ENCODE measurements at regions of chr9 and their contacts with region 1.

Region 1: GRCh38 chr9:109574068-109574882 is 76.2 kb upstream of the PTPN3 start:
- DNase-seq: peak in 1 of 2 donors; percentile 48
- ATAC-seq: peak; percentile 46 to 81 (median 72)
- H3K4me3 ChIP-seq: no peak overlapping the region
- H3K27ac ChIP-seq: no peak overlapping the region
- H3K4me1 ChIP-seq: peaks cover 0 to 5% (median 0%) of the 10 kb centered on the region in 9 donors
- H3K27me3 ChIP-seq: no peaks in the 10 kb centered on the region
- CTCF ChIP-seq: peak; percentile 39 to 82 (median 73)

Region 2: DNA sequence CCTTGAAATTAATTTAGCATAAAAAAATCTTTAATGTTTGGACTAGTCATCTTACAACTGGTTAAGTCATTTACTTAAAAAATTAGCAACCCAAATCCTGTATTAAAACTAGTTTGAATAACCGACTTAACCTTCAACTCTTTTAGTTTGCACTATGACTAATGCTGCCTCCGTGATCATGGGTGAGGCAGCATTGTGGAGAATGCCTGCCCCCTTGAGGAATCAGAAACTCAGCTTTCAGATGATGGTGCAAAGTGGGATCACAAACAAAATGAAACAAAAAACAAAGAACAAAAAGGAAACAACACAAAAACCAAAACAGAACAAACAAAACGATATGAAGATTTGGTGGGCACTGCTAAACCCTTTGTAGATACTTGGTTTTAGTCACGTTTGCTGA is 78.7 kb after region 1 on chr9:
- intact Hi-C with region 1: loop called in 9 of 10 experiments (anchors 1 to 5 kb)
- DNase-seq: peak; percentile 7 to 17
- ATAC-seq: peak in 7 of 8 donors; percentile 52 to 82 (median 77)
- H3K4me3 ChIP-seq: no peak overlapping the region
- H3K27ac ChIP-seq: no peak overlapping the region
- H3K4me1 ChIP-seq: no peaks in the 10 kb centered on the region
- H3K27me3 ChIP-seq: no peaks in the 10 kb centered on the region
- CTCF ChIP-seq: peak; percentile 14 to 72 (median 45)

Region 3: DNA sequence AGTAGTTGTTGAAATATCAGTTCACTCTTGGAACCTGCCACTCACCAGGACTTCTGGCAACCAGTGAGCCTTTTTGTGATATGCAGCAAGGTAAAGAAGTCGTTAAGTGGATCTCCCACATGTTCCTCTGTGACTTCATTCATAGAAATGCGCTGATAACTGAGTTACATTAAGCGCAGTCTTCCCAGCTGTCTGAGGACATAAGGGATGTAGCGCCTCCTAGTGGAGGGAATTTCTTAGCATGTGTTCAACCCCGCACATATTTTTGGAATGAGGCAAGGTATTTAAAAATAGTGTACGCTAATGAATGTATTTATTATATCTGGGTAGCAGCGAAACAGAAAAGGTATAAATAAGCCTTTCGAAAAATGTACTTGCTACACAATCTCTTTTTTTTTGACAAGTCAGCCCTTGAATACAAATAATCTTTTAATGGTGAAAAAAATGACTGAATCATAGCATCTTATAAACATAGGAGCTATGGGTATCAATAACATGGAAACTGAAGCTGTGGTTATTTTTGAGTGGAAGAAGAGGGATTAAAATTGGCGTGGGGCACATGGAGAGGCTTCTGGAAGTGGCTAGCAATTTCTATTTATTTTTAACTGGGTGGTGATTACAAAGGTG is 243.7 kb after region 1 on chr9:
- intact Hi-C with region 1: loop called in 6 of 10 experiments (anchors 2 to 10 kb)
- DNase-seq: peak in 1 of 2 donors; percentile 92
- ATAC-seq: peak; percentile 62 to 91 (median 86)
- H3K4me3 ChIP-seq: peak overlapping the region in 3 of 10 donors; percentile 5 to 17 (median 15)
- H3K27ac ChIP-seq: peak overlapping the region; percentile 9 to 83 (median 70)
- H3K4me1 ChIP-seq: peaks cover 5 to 37% (median 32%) of the 10 kb centered on the region in 9 donors
- H3K27me3 ChIP-seq: no peaks in the 10 kb centered on the region
- CTCF ChIP-seq: peak; percentile 78 to 89 (median 83)

Region 4: DNA sequence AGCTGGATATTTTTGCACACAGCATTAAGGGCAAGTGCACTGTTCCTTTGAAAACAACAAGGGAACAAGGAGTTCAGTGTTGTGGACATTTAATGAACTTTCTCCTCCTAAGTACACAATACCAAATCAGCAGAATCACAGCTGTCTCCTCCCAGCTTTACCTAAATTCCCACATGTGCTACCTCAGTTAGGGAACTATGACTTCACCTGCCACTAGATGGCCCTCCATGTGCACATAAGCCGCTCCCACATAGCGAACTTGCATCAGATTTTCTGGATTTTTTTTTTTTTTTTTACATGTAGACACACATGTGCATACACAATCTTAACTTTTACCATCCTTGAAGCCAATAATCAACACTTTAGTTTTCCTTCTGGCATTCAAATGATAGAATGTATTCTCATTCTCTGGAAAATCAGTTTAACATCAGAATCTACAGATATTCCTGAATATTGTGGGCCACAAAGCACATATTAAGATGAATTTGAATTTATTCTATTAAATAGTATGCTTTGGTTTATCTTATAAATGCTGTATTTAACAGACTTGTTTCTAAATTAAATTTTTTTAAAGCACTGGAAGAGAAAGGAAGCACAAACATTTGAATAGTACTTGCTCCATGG is 329.4 kb after region 1 on chr9:
- intact Hi-C with region 1: loop called in 1 of 10 experiments (anchors 5 kb)
- DNase-seq: peak; percentile 28 to 82
- ATAC-seq: peak in 6 of 8 donors; percentile 36 to 56 (median 40)
- H3K4me3 ChIP-seq: no peak overlapping the region
- H3K27ac ChIP-seq: peak overlapping the region in 1 of 10 donors; percentile 16
- H3K4me1 ChIP-seq: peaks cover 0 to 76% (median 35%) of the 10 kb centered on the region in 9 donors
- H3K27me3 ChIP-seq: no peaks in the 10 kb centered on the region
- CTCF ChIP-seq: peak; percentile 46 to 93 (median 84)

Region 5: GRCh38 chr9:110152704-110153374 is 578.6 kb after region 1 on chr9:
- intact Hi-C with region 1: loop called in 2 of 10 experiments (anchors 10 kb)
- DNase-seq: no peak
- ATAC-seq: peak in 7 of 8 donors; percentile 16 to 38 (median 25)
- H3K4me3 ChIP-seq: no peak overlapping the region
- H3K27ac ChIP-seq: peak overlapping the region in 5 of 10 donors; percentile 2 to 45 (median 28)
- H3K4me1 ChIP-seq: peaks cover 20 to 100% (median 96%) of the 10 kb centered on the region in 9 donors
- H3K27me3 ChIP-seq: no peaks in the 10 kb centered on the region
- CTCF ChIP-seq: peak; percentile 45 to 84 (median 74)

Region 6: DNA sequence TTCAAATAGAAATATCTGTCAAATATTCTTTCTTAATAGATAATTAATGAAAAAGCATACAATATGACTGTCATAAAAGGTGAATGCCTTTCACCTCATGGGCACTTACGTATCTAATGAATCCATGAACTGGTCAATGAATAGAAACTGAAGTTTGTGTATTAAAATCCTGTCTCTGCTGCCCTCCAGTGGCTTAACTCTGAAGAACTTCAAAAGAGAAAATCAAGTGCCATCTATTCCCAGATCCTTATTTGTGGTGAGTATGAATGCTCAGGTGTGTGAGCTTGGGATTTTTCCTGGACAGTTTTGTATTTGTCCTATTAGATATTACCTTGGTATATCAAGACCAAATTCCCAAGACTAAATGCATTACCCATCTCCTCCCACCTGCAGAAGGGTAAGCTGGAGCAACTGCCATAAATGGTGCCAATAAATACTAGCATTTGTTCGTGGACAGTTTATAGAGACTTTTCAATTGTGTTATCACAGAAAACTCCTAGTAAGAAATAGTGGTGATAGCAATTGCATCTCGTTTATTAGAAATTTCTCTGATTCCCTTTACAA is 1049.3 kb after region 1 on chr9:
- intact Hi-C with region 1: loop called in 1 of 10 experiments (anchors 5 kb)
- DNase-seq: peak in 1 of 2 donors; percentile 51
- ATAC-seq: peak in 2 of 8 donors; percentile 21 to 47
- H3K4me3 ChIP-seq: no peak overlapping the region
- H3K27ac ChIP-seq: no peak overlapping the region
- H3K4me1 ChIP-seq: no peaks in the 10 kb centered on the region
- H3K27me3 ChIP-seq: no peaks in the 10 kb centered on the region
- CTCF ChIP-seq: peak; percentile 44 to 78 (median 69)